ENCODE measurements at regions of chr12 and their contacts with region 1.

Region 1: DNA sequence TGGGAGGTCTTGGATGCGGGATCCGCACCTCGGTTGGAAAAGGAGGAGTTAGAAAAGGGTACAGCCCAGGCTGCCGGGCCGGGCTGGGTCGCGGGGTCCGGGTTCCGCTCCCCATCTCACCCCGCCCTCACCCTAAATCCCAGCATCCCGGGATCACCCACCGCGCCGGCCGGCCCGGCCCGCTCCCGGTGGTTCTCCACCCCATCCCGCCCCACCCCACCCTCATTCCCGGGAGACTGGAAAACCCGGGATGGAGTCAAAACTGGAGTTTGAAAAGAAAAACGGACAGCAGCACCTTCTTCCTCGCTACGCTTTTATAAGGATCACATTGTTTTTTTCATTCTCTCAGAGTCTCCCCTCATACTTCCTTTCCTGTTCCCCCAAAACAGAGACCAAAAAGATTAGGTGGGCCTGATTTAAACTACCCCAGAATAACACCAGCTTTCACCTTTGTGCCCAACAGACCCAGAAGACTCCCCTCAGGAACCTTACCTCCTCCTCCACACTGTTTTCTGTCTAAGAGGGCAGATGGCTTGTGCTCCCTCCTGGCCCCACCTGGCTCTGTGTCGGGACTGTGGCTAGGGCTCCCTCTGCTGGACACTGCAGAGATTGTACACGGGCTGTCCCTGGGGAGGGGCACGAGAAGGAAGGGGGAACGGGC is 2.8 kb downstream of the GLI1 start:
- DNase-seq: peak; percentile 94
- ATAC-seq: peak; percentile 82
- H3K4me3 Mint-ChIP-seq: peak overlapping the region; percentile 77
- H3K27ac Mint-ChIP-seq: peak overlapping the region; percentile 80
- H3K4me1 Mint-ChIP-seq: peaks cover 54% of the 10 kb centered on the region
- H3K27me3 Mint-ChIP-seq: peaks cover 4% of the 10 kb centered on the region

Region 2: DNA sequence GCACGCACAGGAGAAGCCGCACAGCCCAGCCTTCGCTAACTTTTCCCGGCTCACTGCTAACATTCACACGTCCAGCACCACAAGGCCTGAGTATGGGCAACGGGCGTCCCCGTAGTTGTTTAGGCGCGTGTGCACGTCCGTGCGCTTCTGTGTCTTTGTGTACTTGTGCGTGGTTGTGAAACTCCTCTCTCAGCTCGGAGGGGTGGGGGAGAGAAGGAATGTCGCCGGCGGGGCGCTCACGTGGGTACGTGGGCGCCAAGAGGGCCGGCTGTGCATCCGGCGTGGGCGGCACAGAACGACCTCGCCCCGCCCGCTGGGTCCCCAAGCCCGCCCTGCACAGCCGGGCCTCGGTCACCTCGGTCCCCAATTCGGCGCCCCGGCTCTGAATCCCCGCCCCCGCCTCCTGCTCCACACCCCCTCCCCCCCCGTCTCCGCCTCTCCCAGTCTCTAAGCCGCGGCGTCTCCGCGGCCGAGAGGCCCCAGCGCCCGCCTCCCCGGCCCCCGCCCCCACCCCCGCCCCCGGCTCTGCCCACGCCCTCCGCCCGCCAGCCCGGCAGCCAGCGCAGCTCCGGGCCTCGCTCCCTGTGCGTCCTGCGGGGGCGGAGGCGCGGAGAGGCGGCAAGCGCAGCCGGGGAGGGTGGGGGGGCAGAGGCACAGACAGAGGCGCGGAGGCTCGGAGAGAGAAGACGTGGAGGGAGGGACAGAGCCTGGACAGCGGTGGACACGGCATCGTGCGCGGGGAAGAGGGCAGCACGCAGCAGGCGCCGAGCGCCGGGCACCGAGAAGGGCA is 373.7 kb before region 1 on chr12 and contains the start of gene NAB2:
- CTCF ChIA-PET with region 1: interaction called, 3 read pairs
- POLR2A ChIA-PET with region 1: no interaction called
- intact Hi-C with region 1: loop called in 1 of 2 experiments (anchors 5 kb)
- DNase-seq: peak; percentile 95
- ATAC-seq: peak; percentile 49
- H3K4me3 Mint-ChIP-seq: peak within 1 kb of the TSS; percentile 93
- H3K27ac Mint-ChIP-seq: peak within 1 kb of the TSS; percentile 95
- H3K4me1 Mint-ChIP-seq: peaks cover 63% of the 10 kb centered on the region
- H3K27me3 Mint-ChIP-seq: no peaks in the 10 kb centered on the region
- total RNA-seq, gene NAB2: 46.8 to 48.6 TPM

Region 3: DNA sequence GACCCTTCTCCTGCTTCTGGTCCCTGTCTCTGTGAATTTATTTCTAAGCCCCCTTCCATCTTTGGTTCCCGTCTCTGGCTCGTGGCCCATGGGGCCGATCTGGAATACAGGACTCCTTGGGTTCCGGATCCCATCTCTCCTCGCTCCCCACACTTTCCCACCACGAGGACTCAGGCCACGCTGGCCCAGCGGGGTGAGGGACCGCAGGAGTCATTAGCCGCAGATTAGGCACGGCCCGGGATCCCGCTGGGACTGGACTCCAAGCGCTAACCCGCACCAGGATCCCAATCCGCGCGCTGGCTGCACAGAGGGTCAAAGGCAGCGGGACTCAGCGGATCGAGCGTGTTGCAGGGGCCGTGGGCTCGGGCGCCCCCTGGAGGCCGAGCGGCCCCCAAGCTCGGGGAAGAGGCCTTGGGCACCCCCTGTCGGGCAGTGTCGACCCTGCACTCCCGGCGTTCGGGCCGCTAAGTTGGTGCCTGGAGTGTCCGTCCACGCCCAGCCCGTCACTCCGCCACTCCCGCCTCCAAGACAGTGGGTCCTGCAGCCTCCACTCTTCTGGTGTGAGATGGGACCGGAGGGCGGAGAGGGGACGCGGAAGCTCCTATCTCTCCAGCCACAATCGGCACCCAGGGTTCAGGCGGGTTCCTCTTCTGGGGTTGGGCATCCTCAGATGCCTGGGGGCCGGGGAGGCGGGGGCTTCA is 223.4 kb before region 1 on chr12:
- CTCF ChIA-PET with region 1: interaction called, 7 read pairs
- POLR2A ChIA-PET with region 1: no interaction called
- intact Hi-C with region 1: loop called in 1 of 2 experiments (anchors 1 kb)
- DNase-seq: peak; percentile 94
- ATAC-seq: peak; percentile 57
- H3K4me3 Mint-ChIP-seq: peak overlapping the region; percentile 83
- H3K27ac Mint-ChIP-seq: peak overlapping the region; percentile 80
- H3K4me1 Mint-ChIP-seq: peaks cover 70% of the 10 kb centered on the region
- H3K27me3 Mint-ChIP-seq: peaks cover 44% of the 10 kb centered on the region

Region 4: GRCh38 chr12:57280211-57281062 is 181.9 kb before region 1 on chr12:
- CTCF ChIA-PET with region 1: interaction called, 5 read pairs
- POLR2A ChIA-PET with region 1: no interaction called
- intact Hi-C with region 1: loop called (anchors 1 kb)
- DNase-seq: peak; percentile 88
- ATAC-seq: peak; percentile 99
- H3K4me3 Mint-ChIP-seq: peak overlapping the region; percentile 69
- H3K27ac Mint-ChIP-seq: peak overlapping the region; percentile 94
- H3K4me1 Mint-ChIP-seq: peaks cover 23% of the 10 kb centered on the region
- H3K27me3 Mint-ChIP-seq: no peaks in the 10 kb centered on the region

Region 5: GRCh38 chr12:57430931-57431720 is 31.3 kb before region 1 on chr12 and contains the start of gene R3HDM2:
- CTCF ChIA-PET with region 1: interaction called, 23 read pairs
- POLR2A ChIA-PET with region 1: no interaction called
- intact Hi-C with region 1: loop called (anchors 1 to 2 kb)
- DNase-seq: peak; percentile 97
- ATAC-seq: peak; percentile 95
- H3K4me3 Mint-ChIP-seq: peak within 1 kb of the TSS; percentile 89
- H3K27ac Mint-ChIP-seq: peak within 1 kb of the TSS; percentile 100
- H3K4me1 Mint-ChIP-seq: peaks cover 35% of the 10 kb centered on the region
- H3K27me3 Mint-ChIP-seq: no peaks in the 10 kb centered on the region
- total RNA-seq, gene R3HDM2: 45.9 to 52.5 TPM

Region 6: GRCh38 chr12:57487597-57488401 is 25.4 kb after region 1 on chr12 and contains the start of gene MARS1:
- CTCF ChIA-PET with region 1: interaction called, 9 read pairs
- POLR2A ChIA-PET with region 1: interaction called, 4 read pairs
- intact Hi-C with region 1: loop called (anchors 1 to 2 kb)
- DNase-seq: peak; percentile 96
- ATAC-seq: peak; percentile 98
- H3K4me3 Mint-ChIP-seq: peak within 1 kb of the TSS; percentile 100
- H3K27ac Mint-ChIP-seq: peak within 1 kb of the TSS; percentile 94
- H3K4me1 Mint-ChIP-seq: peaks cover 35% of the 10 kb centered on the region
- H3K27me3 Mint-ChIP-seq: no peaks in the 10 kb centered on the region
- total RNA-seq, gene MARS1: 389 to 583 TPM

Region 7: DNA sequence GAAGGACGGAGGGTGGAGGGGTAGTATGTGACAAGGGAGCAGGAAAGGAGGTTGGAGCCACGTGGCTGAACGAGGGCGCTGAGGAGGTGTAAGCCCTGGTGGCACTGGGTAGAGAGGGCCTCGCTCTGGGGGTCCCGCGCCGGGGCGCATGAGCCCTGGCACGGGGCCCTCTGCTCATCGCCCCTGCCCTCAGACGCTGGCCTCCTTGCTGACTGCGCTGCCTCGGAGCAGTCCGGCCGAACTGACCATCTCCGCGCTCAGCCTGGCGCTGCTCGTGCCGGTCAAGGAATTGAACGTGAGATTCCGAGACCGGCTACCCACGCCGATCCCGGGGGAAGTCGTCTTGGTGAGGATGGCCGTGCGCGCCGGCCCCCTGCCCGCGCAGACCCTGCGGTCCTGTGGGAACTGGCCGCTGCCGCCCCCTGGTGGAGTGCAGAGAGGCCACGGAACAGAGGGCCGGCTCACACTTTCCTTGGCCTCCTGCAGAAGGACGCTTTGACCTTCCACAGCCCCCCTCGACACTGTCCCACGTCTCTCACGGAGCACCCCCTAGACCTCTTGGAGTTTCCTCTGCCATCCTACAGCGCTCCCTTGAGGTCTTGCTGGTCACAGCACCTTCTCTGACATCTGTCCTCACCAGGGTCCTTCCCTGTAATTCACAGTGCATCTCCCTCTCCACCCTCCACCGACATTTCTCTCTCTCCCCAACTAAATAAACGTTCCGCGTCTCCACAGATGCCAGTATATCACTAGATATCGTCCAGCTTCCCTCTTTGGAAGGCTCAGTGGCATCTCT is 159.3 kb after region 1 on chr12:
- CTCF ChIA-PET with region 1: interaction called, 8 read pairs
- POLR2A ChIA-PET with region 1: no interaction called
- intact Hi-C with region 1: loop called (anchors 1 to 5 kb)
- DNase-seq: peak; percentile 79
- ATAC-seq: peak; percentile 80
- H3K4me3 Mint-ChIP-seq: peak overlapping the region; percentile 60
- H3K27ac Mint-ChIP-seq: no peak overlapping the region
- H3K4me1 Mint-ChIP-seq: peaks cover 28% of the 10 kb centered on the region
- H3K27me3 Mint-ChIP-seq: peaks cover 84% of the 10 kb centered on the region